ENCODE measurements at regions of chr7 and their contacts with region 1.

Region 1: DNA sequence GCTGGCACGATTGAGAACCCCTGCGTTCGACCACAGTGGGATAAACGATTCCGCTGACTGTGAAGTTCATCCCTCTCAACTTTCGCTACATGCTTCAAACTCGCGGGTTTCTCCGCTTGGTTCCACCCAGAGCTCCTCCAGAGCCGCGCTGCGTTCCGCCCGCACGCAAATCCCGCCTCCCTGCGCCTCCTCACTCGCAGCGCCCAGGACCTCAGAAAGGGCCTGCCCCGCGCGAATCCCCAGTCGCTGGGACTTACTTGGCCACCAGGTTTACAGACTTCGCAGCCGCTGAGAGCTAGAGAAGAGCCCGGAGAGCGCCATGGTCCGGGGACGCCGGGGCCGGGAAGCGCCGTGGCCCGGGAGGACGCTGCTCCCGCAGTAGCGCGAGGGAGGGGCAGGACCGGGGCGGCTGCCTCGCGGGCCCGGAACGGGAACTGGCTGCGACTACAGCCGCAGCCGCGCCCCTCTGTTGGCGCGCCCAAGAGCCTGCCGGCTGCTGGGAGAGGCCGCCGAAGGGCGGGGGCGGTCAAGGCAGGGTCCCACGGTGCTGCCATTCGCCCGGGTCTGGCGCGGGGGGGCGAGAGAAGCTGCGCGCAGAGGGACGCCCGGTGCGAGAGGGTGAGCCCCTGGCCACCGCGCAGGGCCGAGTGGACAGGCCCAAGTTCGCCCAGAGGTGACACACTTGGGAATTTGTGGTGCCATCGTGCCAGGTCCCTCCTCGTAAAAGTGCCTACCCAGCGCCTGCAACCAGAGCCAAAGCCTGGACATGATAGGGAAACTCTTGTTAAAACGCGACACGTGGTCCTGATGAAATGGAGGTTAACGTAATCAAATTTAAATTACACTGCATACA is at the start of gene NOD1:
- DNase-seq: no peak
- ATAC-seq: peak; percentile 93
- H3K4me3 ChIP-seq: peak within 1 kb of the TSS; percentile 96
- H3K27ac ChIP-seq: peak within 1 kb of the TSS; percentile 74
- H3K4me1 ChIP-seq: peaks cover 30% of the 10 kb centered on the region
- H3K27me3 ChIP-seq: no peaks in the 10 kb centered on the region
- CTCF ChIP-seq: 0 out of 6 replicates have a peak, but pooled peaks of 1 of the 3 experiments have one; percentile 1
- EP300 ChIP-seq: no peak
- POLR2A ChIP-seq: peak; percentile 92; the same call in 1 of the 2 replicates
- RAD21 ChIP-seq: no peak
- polyA plus RNA-seq, gene NOD1: 1.8 to 2.2 TPM

Region 2: GRCh38 chr7:29177963-29178600 is 1300.5 kb before region 1 on chr7:
- CTCF ChIA-PET with region 1: no interaction called
- POLR2A ChIA-PET with region 1: no interaction called
- RAD21 ChIA-PET with region 1: no interaction called
- SMC1A ChIA-PET with region 1: no interaction called
- in situ Hi-C with region 1: no loop called
- intact Hi-C with region 1: no loop called
- DNase-seq: no peak
- ATAC-seq: no peak
- H3K4me3 ChIP-seq: no peak overlapping the region
- H3K27ac ChIP-seq: no peak overlapping the region
- H3K4me1 ChIP-seq: no peaks in the 10 kb centered on the region
- H3K27me3 ChIP-seq: no peaks in the 10 kb centered on the region
- CTCF ChIP-seq: no peak
- EP300 ChIP-seq: no peak
- POLR2A ChIP-seq: no peak
- RAD21 ChIP-seq: no peak

Region 3: GRCh38 chr7:30459591-30460257 is 18.9 kb before region 1 on chr7:
- CTCF ChIA-PET with region 1: interaction called, 4 read pairs
- POLR2A ChIA-PET with region 1: interaction called, 9 read pairs
- RAD21 ChIA-PET with region 1: interaction called, 4 read pairs
- SMC1A ChIA-PET with region 1: interaction called, 18 read pairs
- in situ Hi-C with region 1: no loop called
- intact Hi-C with region 1: no loop called
- DNase-seq: no peak
- ATAC-seq: no peak
- H3K4me3 ChIP-seq: no peak overlapping the region
- H3K27ac ChIP-seq: no peak overlapping the region
- H3K4me1 ChIP-seq: peaks cover 23% of the 10 kb centered on the region
- H3K27me3 ChIP-seq: no peaks in the 10 kb centered on the region
- CTCF ChIP-seq: no peak
- EP300 ChIP-seq: no peak
- POLR2A ChIP-seq: no peak
- RAD21 ChIP-seq: no peak

Region 4: GRCh38 chr7:30465046-30465810 is 13.3 kb before region 1 on chr7:
- CTCF ChIA-PET with region 1: interaction called, 7 read pairs
- POLR2A ChIA-PET with region 1: interaction called, 9 read pairs
- RAD21 ChIA-PET with region 1: interaction called, 4 read pairs
- SMC1A ChIA-PET with region 1: interaction called, 18 read pairs
- in situ Hi-C with region 1: no loop called
- intact Hi-C with region 1: no loop called
- DNase-seq: no peak
- ATAC-seq: no peak; the same call in 2 of the 3 replicates
- H3K4me3 ChIP-seq: no peak overlapping the region
- H3K27ac ChIP-seq: no peak overlapping the region
- H3K4me1 ChIP-seq: peaks cover 32% of the 10 kb centered on the region
- H3K27me3 ChIP-seq: no peaks in the 10 kb centered on the region
- CTCF ChIP-seq: no peak
- EP300 ChIP-seq: no peak
- POLR2A ChIP-seq: no peak
- RAD21 ChIP-seq: no peak

Measured in GM12878 (cell line).